ENCODE measurements at regions of chr12 and their contacts with region 1.

Region 1: DNA sequence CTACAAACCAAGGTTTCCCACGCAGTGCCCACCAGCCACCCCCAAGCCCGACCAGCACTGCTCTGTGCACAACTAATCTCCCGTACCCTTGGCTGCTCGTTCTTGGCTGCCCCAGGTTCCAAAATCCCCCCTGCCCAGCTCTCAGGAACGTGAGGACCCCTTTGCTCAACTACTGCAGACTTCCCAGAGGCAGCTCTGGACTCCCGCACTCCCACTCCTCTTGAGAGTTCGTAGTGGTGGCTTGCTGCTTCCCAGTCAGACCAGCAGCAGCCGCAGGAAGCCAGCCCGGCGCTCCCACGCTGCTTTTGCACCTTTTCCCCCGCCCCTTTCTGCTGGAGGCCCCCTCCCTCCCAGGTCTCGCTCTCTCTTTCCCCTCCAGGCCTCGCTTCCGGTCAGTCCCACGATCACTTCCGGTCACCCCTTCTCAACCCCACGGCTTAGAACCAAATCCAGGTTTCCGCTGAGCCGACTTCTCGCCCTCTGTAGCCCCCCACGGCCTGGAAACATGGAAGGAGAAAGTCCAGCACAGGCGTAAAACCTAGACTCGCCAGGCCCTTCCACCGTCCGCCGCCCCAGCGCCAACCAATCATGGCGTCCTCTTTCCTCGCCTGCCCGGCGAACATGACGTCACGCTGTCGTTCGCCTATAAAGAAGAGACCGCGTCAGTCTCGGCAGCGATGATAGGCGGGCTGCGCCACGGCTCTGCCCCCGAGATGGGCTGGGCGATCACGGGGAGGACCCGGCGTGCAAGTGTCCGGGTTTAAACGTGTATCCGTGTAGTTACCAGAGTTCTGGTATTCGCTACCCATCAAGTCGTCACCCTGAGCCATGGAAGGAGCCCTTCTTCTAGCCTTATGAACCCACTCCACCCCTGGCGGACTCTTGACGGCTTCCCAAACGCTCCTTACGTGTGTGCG is at the start of gene TFCP2:
- DNase-seq: peak; percentile 89 to 95
- H3K4me3 ChIP-seq: peak within 1 kb of the TSS; percentile 87
- H3K27ac ChIP-seq: peak within 1 kb of the TSS; percentile 98
- H3K4me1 ChIP-seq: peaks cover 20% of the 10 kb centered on the region
- H3K27me3 ChIP-seq: no peaks in the 10 kb centered on the region
- CTCF ChIP-seq: no peak
- total RNA-seq, gene TFCP2: 17.1 and 25.7 TPM in 2 replicates

Region 2: GRCh38 chr12:50677858-50678257 is 494.9 kb before region 1 on chr12:
- CTCF ChIA-PET with region 1: no interaction called
- POLR2A ChIA-PET with region 1: no interaction called
- intact Hi-C with region 1: no loop called
- DNase-seq: no peak
- H3K4me3 ChIP-seq: no peak overlapping the region
- H3K27ac ChIP-seq: no peak overlapping the region
- H3K4me1 ChIP-seq: no peaks in the 10 kb centered on the region
- H3K27me3 ChIP-seq: no peaks in the 10 kb centered on the region
- CTCF ChIP-seq: no peak

Region 3: DNA sequence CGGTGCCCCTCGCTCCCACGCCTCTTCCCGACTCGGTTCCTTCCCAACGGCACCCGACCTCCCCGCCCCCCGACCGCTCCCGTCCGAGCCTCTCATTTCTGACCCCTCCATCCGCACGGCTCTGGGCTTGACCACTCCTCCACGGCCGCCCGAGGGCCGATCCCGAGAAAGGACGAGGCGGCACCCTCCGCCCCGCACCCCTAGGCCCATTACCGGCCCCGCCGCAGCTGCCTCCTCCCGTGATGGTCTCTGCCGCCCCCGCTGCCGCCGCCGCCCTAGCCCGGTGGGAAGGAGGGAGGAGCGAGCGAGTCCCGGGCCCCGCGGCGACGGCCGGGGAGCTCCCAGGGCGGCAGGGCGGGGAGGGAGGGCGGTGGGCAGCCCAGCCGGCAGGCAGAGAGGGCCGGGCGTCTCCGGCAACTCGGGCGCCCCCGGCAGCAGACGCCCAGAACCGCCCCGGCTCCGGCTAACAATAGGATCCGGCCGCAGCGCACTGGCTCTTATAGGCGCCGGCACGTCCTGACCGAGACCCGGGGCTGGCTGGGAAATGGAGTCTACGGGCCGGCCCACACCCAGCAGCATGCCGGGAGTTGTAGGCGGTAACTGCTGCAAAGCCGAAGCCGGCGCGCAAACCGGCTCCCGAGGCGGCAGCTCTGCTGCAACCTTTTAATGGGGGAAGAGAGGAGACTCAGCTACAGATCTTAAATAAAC is 89.5 kb before region 1 on chr12 and contains the start of gene CSRNP2:
- CTCF ChIA-PET with region 1: interaction called, 16 read pairs
- POLR2A ChIA-PET with region 1: interaction called, 7 read pairs
- intact Hi-C with region 1: no loop called
- DNase-seq: peak; percentile 89 to 96
- H3K4me3 ChIP-seq: peak within 1 kb of the TSS; percentile 84
- H3K27ac ChIP-seq: peak within 1 kb of the TSS; percentile 30
- H3K4me1 ChIP-seq: peaks cover 8% of the 10 kb centered on the region
- H3K27me3 ChIP-seq: no peaks in the 10 kb centered on the region
- CTCF ChIP-seq: no peak
- total RNA-seq, gene CSRNP2: 19.3 and 23.1 TPM in 2 replicates

Region 4: DNA sequence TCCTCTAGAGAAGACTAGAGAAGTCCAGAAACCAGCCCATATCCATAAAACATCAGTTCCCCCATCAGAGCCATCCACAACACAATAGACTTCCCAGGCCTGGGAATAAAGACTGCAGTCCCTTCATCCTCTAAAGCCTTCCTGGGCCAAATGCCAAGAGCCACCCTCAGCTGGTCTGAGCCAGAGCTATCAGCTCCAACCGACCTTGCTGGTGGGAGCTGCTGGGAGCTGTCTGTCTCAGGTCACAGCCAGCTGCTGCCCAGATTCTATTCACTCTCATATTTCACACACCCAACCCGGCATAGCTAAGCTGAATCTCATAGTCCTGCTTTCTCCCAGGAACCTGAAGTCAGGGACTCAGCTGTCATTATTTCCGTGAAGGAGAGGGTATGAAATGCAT is 11.0 kb after region 1 on chr12:
- CTCF ChIA-PET with region 1: interaction called, 4 read pairs
- POLR2A ChIA-PET with region 1: interaction called, 13 read pairs
- intact Hi-C with region 1: no loop called
- DNase-seq: peak in 1 of 2 experiments; percentile 15
- H3K4me3 ChIP-seq: no peak overlapping the region
- H3K27ac ChIP-seq: no peak overlapping the region
- H3K4me1 ChIP-seq: no peaks in the 10 kb centered on the region
- H3K27me3 ChIP-seq: no peaks in the 10 kb centered on the region
- CTCF ChIP-seq: no peak

Region 5: GRCh38 chr12:51246254-51246853 is 73.6 kb after region 1 on chr12:
- CTCF ChIA-PET with region 1: no interaction called
- POLR2A ChIA-PET with region 1: no interaction called
- intact Hi-C with region 1: no loop called
- DNase-seq: no peak
- H3K4me3 ChIP-seq: no peak overlapping the region
- H3K27ac ChIP-seq: no peak overlapping the region
- H3K4me1 ChIP-seq: peaks cover under 1% of the 10 kb centered on the region; the same call in 1 of the 2 replicates
- H3K27me3 ChIP-seq: no peaks in the 10 kb centered on the region
- CTCF ChIP-seq: no peak